ENCODE measurements at regions of chr19 and their contacts with region 1.

Region 1: DNA sequence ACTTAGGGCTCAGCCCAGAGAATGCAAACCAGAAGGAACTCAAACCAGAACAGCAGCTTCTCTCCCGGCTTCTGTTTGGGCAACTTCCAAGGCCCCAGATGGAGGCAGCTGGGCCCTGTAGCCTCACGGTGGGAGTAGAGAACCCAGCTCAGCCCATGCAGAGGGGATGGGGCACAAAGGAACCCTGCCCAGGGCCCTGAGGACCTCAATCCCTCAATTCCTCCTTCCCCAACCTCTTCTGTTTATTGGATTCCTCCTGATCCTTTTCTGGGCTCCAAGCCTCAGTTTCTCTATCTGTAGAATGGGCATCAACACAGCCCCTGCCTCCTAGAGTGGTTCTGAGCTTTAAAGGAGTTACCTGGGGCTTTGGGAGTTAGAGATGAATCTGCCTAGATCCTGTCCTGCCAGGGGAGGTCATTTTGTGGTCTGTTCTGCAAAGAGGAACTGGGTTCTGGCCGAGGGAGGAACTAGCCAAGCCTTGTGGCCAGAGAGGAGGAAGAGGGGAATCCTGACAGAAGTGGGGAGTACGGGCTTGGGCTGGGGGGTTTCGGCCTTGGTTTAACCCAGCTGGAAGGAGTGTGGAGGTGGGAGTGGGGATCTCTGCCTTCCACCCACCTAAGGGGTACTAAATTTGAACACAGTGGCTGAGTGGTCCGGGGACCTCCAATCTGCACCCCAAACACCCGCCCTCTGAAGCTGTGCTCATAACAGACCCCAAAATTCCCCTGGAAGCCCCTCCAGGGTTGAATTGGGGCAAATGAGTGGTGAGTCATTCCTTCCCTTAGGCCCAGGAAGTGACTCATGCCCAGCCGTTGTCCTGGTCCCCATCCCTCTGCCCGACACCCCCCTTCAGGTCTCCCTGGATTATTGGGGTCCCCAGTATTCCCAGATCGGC is 2.7 kb downstream of the ADGRE5 start:
- DNase-seq: peak; percentile 89
- H3K4me3 Mint-ChIP-seq: peak overlapping the region; percentile 92
- H3K27ac Mint-ChIP-seq: peak overlapping the region; percentile 98
- H3K4me1 Mint-ChIP-seq: peaks cover 34% of the 10 kb centered on the region
- H3K27me3 Mint-ChIP-seq: no peaks in the 10 kb centered on the region

Region 2: DNA sequence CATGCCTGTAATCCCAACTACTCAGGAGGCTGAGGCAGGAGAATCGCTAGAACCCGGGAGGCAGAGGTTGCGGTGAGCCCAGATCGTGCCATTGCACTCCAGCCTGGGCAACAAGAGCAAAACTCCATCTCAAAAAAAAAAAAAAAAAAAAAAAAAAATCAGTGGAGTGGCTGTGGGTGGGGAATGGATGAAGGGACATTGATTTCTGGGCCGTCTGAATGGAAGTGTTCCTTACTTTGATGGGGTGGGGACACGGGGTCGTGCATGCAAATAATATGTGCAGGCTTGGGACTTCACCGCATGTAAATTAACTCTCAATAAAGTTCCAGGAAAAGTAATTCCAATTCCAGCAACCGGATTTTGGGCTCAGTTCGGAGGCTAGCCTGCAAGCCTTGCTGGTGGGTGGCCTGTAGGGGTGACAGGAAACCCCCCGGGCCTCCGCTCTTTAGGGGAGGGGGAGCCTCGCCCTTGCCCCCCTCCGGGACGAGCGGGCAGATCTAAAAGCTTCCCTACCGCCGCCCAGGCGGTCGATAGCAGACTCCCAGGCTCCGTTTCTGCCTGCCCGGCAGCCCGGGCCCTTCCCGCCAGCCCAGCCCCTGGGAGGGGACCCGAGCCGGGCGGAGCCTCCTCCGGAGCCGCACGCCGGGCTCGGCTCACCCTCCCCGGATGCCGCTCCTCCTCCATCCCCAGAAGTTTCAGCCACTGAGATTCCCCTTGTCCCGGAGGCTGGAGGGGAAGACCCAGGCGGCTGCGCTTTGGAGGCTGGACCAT is 50.6 kb before region 1 on chr19:
- intact Hi-C with region 1: no loop called
- DNase-seq: peak; percentile 72
- H3K4me3 Mint-ChIP-seq: peak overlapping the region; percentile 61
- H3K27ac Mint-ChIP-seq: no peak overlapping the region
- H3K4me1 Mint-ChIP-seq: peaks cover 6% of the 10 kb centered on the region
- H3K27me3 Mint-ChIP-seq: no peaks in the 10 kb centered on the region

Region 3: GRCh38 chr19:14347999-14348889 is 35.7 kb before region 1 on chr19:
- intact Hi-C with region 1: loop called (anchors 1 kb)
- DNase-seq: peak; percentile 91
- H3K4me3 Mint-ChIP-seq: peak overlapping the region; percentile 74
- H3K27ac Mint-ChIP-seq: peak overlapping the region; percentile 72
- H3K4me1 Mint-ChIP-seq: peaks cover 17% of the 10 kb centered on the region
- H3K27me3 Mint-ChIP-seq: no peaks in the 10 kb centered on the region

Region 4: GRCh38 chr19:14366498-14366915 is 17.4 kb before region 1 on chr19:
- intact Hi-C with region 1: loop called (anchors 1 kb)
- DNase-seq: peak; percentile 97
- H3K4me3 Mint-ChIP-seq: peak overlapping the region; percentile 72
- H3K27ac Mint-ChIP-seq: peak overlapping the region; percentile 96
- H3K4me1 Mint-ChIP-seq: peaks cover 59% of the 10 kb centered on the region
- H3K27me3 Mint-ChIP-seq: no peaks in the 10 kb centered on the region

Region 5: GRCh38 chr19:14405758-14406644 is 22.1 kb after region 1 on chr19:
- intact Hi-C with region 1: loop called (anchors 2 kb)
- DNase-seq: peak; percentile 97
- H3K4me3 Mint-ChIP-seq: no peak overlapping the region
- H3K27ac Mint-ChIP-seq: peak overlapping the region; percentile 76
- H3K4me1 Mint-ChIP-seq: peaks cover 2% of the 10 kb centered on the region
- H3K27me3 Mint-ChIP-seq: no peaks in the 10 kb centered on the region

Region 6: GRCh38 chr19:14419106-14419813 is 35.4 kb after region 1 on chr19 and contains the start of gene DDX39A:
- intact Hi-C with region 1: loop called (anchors 1 kb)
- DNase-seq: peak; percentile 99
- H3K4me3 Mint-ChIP-seq: peak within 1 kb of the TSS; percentile 97
- H3K27ac Mint-ChIP-seq: peak within 1 kb of the TSS; percentile 99
- H3K4me1 Mint-ChIP-seq: peaks cover 28% of the 10 kb centered on the region
- H3K27me3 Mint-ChIP-seq: peaks cover 3% of the 10 kb centered on the region
- total RNA-seq, gene DDX39A: 274 and 280 TPM in 2 replicates

Region 7: DNA sequence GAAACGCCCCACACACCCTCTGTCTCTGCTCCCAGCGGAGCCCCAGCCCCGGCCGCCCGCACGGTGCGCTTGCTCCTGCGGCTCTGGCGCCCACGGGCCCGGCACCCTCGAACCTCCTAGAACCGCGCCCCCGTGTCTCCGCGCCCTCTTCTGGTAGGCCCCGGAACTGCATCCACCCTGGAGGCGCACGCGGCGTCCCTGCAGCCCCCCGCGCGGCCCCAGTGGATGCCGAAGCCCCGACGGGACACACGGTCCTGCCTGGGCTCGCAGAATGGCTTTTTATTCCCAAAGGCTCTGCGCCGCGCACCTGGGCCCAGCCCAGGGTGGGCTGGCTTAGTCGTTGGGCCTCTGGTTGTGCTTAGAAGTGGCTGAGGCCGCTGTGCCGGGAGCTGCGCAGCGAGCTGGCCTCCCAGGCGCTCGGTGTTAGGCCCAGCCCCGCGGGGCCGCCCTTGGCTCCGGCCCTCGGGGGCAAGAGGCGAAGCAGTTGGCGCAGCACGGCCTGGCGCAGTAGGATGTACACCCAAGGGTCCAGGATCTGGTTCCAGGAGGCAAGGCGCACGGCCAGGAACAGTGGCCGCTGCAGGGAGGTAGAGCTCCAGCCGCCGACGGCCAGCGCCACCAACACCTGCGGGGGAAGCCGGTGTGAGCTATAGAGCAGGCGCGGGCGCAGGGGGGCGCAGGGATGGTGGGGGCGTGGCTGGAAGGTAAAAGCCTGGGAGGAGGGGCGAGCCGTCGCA is 88.5 kb after region 1 on chr19:
- intact Hi-C with region 1: no loop called
- DNase-seq: peak; percentile 96
- H3K4me3 Mint-ChIP-seq: no peak overlapping the region
- H3K27ac Mint-ChIP-seq: no peak overlapping the region
- H3K4me1 Mint-ChIP-seq: peaks cover 26% of the 10 kb centered on the region
- H3K27me3 Mint-ChIP-seq: peaks cover 16% of the 10 kb centered on the region

Region 8: GRCh38 chr19:14496028-14496833 is 112.3 kb after region 1 on chr19 and contains the start of gene GIPC1:
- intact Hi-C with region 1: no loop called
- DNase-seq: peak; percentile 97
- H3K4me3 Mint-ChIP-seq: peak within 1 kb of the TSS; percentile 87
- H3K27ac Mint-ChIP-seq: peak within 1 kb of the TSS; percentile 79
- H3K4me1 Mint-ChIP-seq: peaks cover 19% of the 10 kb centered on the region
- H3K27me3 Mint-ChIP-seq: no peaks in the 10 kb centered on the region
- total RNA-seq, gene GIPC1: 39.9 and 40.1 TPM in 2 replicates

Measured in activated CD4-positive, alpha-beta T cell treated with anti-CD3 and anti-CD28 coated beads, Interleukin-2, amount 10 ng/mL, durations not matched to agents 24 days and 14 days (primary cell).